ENCODE measurements at regions of chr18 and their contacts with region 1.

Region 1: DNA sequence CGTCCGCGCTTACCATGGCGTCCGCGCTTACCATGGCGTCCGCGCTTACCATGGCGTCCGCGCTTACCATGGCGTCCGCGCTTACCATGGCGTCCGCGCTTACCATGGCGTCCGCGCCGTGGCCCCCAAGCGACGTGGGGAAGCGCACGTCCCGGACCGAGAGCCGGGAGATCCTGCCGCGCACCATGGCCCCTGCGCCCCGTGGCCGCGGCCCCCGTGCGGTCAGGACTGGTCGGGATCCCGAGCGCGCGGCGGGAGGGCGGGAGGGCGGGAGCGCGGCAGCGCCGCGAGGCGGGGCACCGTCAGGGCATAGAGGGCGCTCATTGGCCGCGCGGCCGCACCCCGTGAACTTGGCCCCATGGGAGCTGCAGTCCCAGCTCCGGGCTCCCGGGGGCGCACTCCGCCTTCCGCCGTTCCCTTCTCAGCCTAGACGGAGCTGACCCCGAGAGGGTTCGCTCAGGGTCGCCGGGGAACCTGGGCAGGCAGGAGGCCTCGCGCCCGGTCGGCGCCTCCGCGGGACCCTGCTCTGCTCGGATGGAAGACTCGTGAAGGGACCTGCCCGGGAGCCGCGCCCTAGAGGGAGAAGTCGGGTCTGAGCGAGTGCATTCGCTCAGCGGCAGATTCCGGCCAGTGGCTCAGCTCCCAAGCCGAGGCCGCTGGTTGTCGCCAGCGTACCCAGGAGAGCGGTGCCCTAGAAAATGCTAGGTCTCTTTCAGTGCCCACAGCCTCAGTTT is at the start of gene ENOSF1:
- DNase-seq: peak; percentile 79 to 90
- H3K4me3 ChIP-seq: peak within 1 kb of the TSS; percentile 61 to 84 (median 77)
- H3K27ac ChIP-seq: peak within 1 kb of the TSS; percentile 91
- H3K4me1 ChIP-seq: peaks cover 0 to 7% of the 10 kb centered on the region in 2 donors
- H3K27me3 ChIP-seq: no peaks in the 10 kb centered on the region
- CTCF ChIP-seq: peak; percentile 50 to 86 (median 76)
- POLR2A ChIP-seq: peak; percentile 16
- total RNA-seq, gene ENOSF1: 49.4 to 96.0 (median 90.1) TPM

Region 2: GRCh38 chr18:2655178-2655953 is 1942.8 kb after region 1 on chr18 and contains the start of gene SMCHD1:
- intact Hi-C with region 1: loop called (anchors 5 kb)
- DNase-seq: peak; percentile 73 to 77
- H3K4me3 ChIP-seq: peak within 1 kb of the TSS; percentile 91 to 96 (median 91)
- H3K27ac ChIP-seq: peak within 1 kb of the TSS; percentile 97 to 99
- H3K4me1 ChIP-seq: peaks cover 0 to 8% of the 10 kb centered on the region in 2 donors
- H3K27me3 ChIP-seq: no peaks in the 10 kb centered on the region
- CTCF ChIP-seq: no peak
- POLR2A ChIP-seq: no peak
- total RNA-seq, gene SMCHD1: 73.9 to 131 (median 102) TPM

Measured in breast epithelium (tissue), 4 donors.